Heart left ventricle (tissue), 16 donors: ENCODE measurements at regions of chr4 and their contacts with region 1.

Region 1: GRCh38 chr4:168480931-168481611 is 779 bp upstream of the DDX60L start:
- DNase-seq: no peak
- ATAC-seq: peak; percentile 25 to 63 (median 50)
- H3K4me3 ChIP-seq: peak overlapping the region; percentile 38 to 88 (median 72)
- H3K27ac ChIP-seq: peak overlapping the region; percentile 81 to 98 (median 93)
- H3K4me1 ChIP-seq: peaks cover 4 to 56% (median 14%) of the 10 kb centered on the region in 12 donors
- H3K27me3 ChIP-seq: no peaks in the 10 kb centered on the region
- CTCF ChIP-seq: no peak
- POLR2A ChIP-seq: no peak

Region 2: GRCh38 chr4:168183717-168184608 is 297.1 kb before region 1 on chr4:
- intact Hi-C with region 1: no loop called
- DNase-seq: no peak
- ATAC-seq: peak; percentile 32 to 52 (median 42)
- H3K4me3 ChIP-seq: no peak overlapping the region
- H3K27ac ChIP-seq: peak overlapping the region in 4 of 12 donors; percentile 21 to 58 (median 33)
- H3K4me1 ChIP-seq: peaks cover 0 to 5% (median 0%) of the 10 kb centered on the region in 12 donors
- H3K27me3 ChIP-seq: no peaks in the 10 kb centered on the region
- CTCF ChIP-seq: peak; percentile 36 to 67 (median 48)
- POLR2A ChIP-seq: no peak

Region 3: GRCh38 chr4:168264903-168265302 is 216.2 kb before region 1 on chr4:
- intact Hi-C with region 1: loop called in 1 of 10 experiments (anchors 10 kb)
- DNase-seq: peak in 4 of 5 donors; percentile 54 to 79 (median 70)
- ATAC-seq: peak; percentile 87 to 95 (median 92)
- H3K4me3 ChIP-seq: no peak overlapping the region
- H3K27ac ChIP-seq: peak overlapping the region; percentile 38 to 87 (median 62)
- H3K4me1 ChIP-seq: peaks cover 0 to 23% (median 3%) of the 10 kb centered on the region in 12 donors
- H3K27me3 ChIP-seq: no peaks in the 10 kb centered on the region
- CTCF ChIP-seq: no peak
- POLR2A ChIP-seq: no peak

Region 4: DNA sequence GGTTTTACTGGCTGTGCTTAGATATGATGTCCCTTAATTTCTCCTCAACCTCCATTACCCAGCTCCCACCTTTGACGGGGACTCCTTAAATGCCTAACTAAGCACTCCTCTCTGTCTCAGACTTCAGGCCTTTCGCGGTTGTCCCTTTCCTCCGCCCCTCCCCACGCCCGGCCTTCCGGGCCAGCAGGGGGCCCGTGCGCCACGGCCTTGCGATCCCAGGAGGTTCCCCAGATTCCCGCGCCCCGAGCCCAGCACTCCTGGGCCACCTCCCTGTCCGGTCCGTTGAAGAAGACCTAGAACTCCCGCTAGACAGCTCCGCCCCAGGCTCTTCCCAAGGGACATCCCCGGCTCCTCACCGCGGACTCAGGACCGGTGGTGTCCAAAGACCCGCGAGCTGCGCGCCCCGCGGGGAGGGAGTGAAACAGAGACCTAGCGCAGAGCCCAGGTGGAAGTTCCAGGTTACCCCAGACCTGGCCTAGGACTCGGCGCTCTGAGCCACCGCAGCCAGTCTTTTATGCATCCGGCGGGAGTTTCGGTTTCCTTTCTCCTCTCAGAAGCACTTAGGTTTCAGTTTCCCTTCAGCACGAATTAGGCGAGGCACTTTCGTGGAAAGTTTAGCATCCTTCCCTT is 162.7 kb before region 1 on chr4 and contains the start of gene DDX60:
- intact Hi-C with region 1: loop called in 5 of 10 experiments (anchors 2 to 10 kb)
- DNase-seq: peak; percentile 79 to 84 (median 84)
- ATAC-seq: peak; percentile 85 to 96 (median 95)
- H3K4me3 ChIP-seq: peak within 1 kb of the TSS; percentile 62 to 91 (median 78)
- H3K27ac ChIP-seq: peak within 1 kb of the TSS; percentile 91 to 99 (median 97)
- H3K4me1 ChIP-seq: peaks cover 0 to 24% (median 11%) of the 10 kb centered on the region in 12 donors
- H3K27me3 ChIP-seq: no peaks in the 10 kb centered on the region
- CTCF ChIP-seq: peak; percentile 41 to 71 (median 56)
- POLR2A ChIP-seq: peak in 1 of 2 donors; percentile 21
- total RNA-seq, gene DDX60: 3.8 to 27.2 (median 10.6) TPM